Panc1 (cell line): ENCODE measurements at regions of chr17 and their contacts with region 1.

Region 1: DNA sequence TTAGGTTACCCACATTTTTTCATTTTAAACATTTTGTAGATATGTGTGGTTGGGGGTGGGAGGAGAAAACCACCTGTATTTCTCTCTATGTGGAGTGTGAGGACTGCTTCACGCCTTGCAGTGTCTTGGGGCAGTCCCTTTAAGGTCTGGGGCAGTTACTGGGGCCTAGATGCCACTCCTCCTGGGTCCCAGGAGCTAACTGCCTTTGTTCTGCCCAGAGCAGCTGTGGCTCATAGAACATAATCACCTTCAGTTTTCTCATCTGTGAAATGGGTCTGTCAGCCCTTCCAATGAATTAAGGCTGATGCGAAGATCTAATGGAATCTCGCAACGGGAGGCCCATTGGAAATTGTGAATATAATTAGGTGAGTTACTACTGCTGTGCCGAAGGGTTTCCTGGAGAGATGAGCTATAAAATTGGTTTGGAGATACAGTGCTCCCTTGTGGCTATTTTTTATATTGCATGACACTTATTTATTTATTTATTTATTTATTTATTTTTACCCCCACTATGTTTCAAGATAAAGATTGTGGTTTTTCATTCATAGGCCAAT is 22.9 kb downstream of the DHRS7C start:
- DNase-seq: peak; percentile 18
- ATAC-seq: no peak
- H3K4me3 ChIP-seq: no peak overlapping the region
- H3K27ac ChIP-seq: no peak overlapping the region
- H3K4me1 ChIP-seq: no peaks in the 10 kb centered on the region
- H3K27me3 ChIP-seq: no peaks in the 10 kb centered on the region
- CTCF ChIP-seq: peak; percentile 56; the same call in 1 of the 2 replicates

Region 2: DNA sequence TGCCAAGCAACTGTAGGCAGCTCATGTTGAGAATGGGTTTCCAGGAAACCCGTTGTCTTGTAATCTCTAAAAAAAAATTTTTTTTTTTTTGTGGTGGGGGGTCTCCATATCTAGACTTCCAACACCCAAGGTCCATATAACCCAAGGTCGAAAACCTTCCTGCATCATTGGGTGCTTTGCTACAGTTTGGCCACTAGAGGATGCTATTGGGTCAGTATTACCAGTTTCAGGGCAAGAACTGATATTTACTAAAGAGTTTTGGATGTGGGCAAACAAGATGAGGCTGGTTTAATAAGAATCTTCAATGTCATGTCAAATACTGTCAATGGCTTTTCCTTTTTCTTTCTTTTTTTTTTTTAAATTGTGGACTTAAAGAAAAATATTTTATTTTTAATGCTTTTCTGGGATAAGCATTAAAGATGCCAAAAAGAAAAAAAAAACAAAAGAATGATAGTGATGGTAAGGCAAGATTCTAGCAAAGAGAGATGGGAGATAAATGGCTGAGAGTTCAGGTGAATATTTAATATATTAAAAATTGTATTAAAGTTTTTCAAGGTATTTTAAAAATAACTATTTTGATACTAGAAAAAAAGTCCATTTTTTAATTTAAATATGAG is 39.3 kb before region 1 on chr17:
- CTCF ChIA-PET with region 1: interaction called, 3 read pairs
- POLR2A ChIA-PET with region 1: no interaction called
- in situ Hi-C with region 1: no loop called
- intact Hi-C with region 1: loop called (anchors 2 kb)
- DNase-seq: peak; percentile 55
- ATAC-seq: 0 out of 2 replicates have a peak, but pooled peaks have one; percentile 65
- H3K4me3 ChIP-seq: no peak overlapping the region
- H3K27ac ChIP-seq: no peak overlapping the region
- H3K4me1 ChIP-seq: no peaks in the 10 kb centered on the region
- H3K27me3 ChIP-seq: no peaks in the 10 kb centered on the region
- CTCF ChIP-seq: peak; percentile 98

Region 3: DNA sequence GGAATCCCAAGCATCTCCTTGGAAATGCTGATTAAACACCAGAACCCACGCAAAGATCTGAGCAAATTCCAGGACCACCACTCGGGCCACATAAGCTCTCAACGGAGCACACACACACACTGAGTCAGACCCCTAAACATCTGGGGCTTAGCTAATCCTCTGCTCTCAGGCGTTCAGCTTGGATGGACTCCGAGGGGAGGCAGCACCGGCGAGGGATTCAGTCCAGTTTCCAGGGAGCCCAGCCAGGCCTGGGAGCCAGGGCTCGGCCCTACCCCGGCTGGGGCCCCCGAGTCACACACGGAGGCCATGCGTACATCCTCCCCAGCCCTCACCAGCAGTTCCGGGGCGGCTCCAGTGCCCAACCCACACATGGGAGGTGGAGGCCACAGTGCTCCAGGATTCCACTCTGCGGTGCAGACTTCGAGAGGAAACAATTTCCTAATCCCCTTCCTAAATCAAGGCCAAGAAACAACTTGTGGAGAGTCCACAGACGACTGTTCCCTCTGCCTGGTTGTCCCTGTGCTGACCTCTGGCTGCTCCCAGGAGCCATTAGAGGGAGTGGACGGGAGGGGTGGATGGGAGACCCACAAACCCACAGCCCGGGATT is 359.5 kb after region 1 on chr17:
- CTCF ChIA-PET with region 1: interaction called, 10 read pairs
- POLR2A ChIA-PET with region 1: no interaction called
- in situ Hi-C with region 1: no loop called
- intact Hi-C with region 1: no loop called
- DNase-seq: no peak
- ATAC-seq: no peak
- H3K4me3 ChIP-seq: no peak overlapping the region
- H3K27ac ChIP-seq: no peak overlapping the region
- H3K4me1 ChIP-seq: no peaks in the 10 kb centered on the region
- H3K27me3 ChIP-seq: no peaks in the 10 kb centered on the region
- CTCF ChIP-seq: no peak